Head of caudate nucleus (tissue), 42 donors: ENCODE measurements at regions of chr19 and their contacts with region 1.

Region 1: GRCh38 chr19:40425450-40426287 is at the start of gene SERTAD1:
- DNase-seq: peak; percentile 100

Region 2: GRCh38 chr19:40305403-40305802 is 120.3 kb before region 1 on chr19:
- intact Hi-C with region 1: loop called (anchors 5 kb)
- DNase-seq: peak; percentile 55 to 93 (median 82)